Ascending aorta (tissue), 2 donors: ENCODE measurements at regions of chr7 and their contacts with region 1.

Region 1: DNA sequence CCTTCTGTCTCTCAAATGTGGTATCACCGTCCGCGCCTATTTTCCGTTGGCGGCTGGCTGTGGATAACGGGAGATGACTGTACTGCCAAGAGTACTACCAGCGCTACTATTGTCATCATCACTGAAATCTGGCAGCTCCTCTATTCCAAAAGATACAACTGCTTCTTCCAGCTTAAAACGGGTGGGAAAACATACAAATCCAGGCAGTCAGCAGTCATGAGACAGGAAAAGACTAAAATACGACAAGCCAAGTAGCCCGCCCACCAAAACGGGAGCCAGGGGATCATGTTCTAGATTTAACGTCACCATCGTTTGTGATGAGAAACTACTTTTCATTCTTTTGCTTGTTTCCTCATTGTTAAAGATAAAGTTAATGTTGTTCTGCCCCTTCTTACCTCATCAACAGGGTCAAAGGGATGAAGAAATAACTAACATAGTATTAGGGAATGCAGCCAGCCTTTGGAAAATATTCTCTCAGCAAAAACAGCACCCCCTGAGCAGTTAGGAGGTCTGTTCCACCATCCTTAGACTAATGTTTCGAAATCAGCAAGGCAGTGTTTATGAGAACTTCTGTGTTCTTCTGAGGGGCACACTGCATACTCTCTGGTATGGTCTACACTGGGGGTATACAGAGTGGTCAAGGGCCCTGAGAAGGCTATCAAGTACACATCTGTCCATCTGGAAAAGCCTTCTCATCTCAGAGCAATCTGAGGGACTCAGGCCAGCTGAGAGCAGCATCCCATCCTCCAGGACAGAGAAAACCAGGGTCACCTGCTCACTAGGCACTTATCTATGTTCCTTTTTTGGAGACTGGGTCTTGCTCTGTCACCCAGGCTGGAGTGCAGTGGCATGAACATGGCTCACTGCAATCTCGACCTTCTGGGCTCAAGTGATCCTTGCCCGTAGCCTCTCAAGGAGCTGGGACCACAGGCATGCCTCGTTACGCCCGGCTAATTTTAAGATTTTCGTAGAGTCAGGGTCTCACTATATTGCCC is 47.5 kb downstream of the GNA12 start:
- DNase-seq: peak in 1 of 2 donors; percentile 90
- H3K4me3 ChIP-seq: peak overlapping the region in 1 of 2 donors; percentile 37
- H3K27ac ChIP-seq: peak overlapping the region; percentile 64 to 72
- H3K4me1 ChIP-seq: peaks cover 0 to 13% of the 10 kb centered on the region in 2 donors
- H3K27me3 ChIP-seq: no peaks in the 10 kb centered on the region
- CTCF ChIP-seq: no peak

Region 2: GRCh38 chr7:2555121-2556052 is 241.3 kb before region 1 on chr7 and contains the start of gene BRAT1:
- intact Hi-C with region 1: no loop called
- DNase-seq: peak; percentile 84 to 98
- H3K4me3 ChIP-seq: peak within 1 kb of the TSS; percentile 67 to 75
- H3K27ac ChIP-seq: peak within 1 kb of the TSS; percentile 95 to 99
- H3K4me1 ChIP-seq: peaks cover 0 to 20% of the 10 kb centered on the region in 2 donors
- H3K27me3 ChIP-seq: no peaks in the 10 kb centered on the region
- CTCF ChIP-seq: peak in 1 of 3 experiments; percentile 49
- total RNA-seq, gene BRAT1: 84.0 TPM

Region 3: DNA sequence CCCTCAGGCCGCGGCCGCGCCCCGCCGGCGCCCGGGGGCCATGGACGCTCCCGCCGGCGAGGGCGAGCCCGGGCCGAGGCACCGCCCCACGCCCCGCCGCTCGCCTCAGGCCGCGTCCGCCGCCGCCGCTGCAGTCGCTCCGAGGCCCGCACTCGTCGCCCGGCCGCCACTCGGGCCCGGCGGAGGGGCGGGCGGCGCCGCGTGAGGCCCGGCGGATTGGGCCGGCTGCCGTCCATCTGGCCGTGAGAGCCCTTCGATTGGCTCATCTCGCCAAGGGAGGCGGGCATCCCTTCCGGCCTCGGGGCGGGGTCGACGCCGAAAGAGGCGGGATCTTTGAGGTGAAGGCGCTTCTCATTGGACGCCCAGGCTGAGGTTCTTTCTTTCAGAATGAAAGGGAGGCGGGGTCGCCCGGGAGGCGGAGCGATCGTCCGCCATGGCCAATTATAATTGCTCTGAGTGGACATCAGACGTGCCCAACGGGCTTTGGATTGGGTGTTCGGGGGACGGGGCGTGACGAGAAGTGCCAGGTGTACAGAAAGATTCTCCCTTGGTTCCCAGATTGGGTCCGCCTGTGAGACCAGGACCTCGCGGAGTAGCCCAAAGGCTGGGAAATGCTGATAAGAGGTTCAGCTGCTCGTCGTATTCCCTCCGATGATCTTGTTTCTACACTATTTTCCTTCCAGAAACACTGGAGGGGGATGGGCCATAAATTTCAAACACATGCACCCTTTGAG is 47.7 kb after region 1 on chr7 and contains the start of gene GNA12:
- intact Hi-C with region 1: loop called (anchors 5 kb)
- DNase-seq: peak; percentile 97 to 100
- H3K4me3 ChIP-seq: peak within 1 kb of the TSS; percentile 90 to 94
- H3K27ac ChIP-seq: peak within 1 kb of the TSS; percentile 57 to 62
- H3K4me1 ChIP-seq: peaks cover 9 to 18% of the 10 kb centered on the region in 2 donors
- H3K27me3 ChIP-seq: no peaks in the 10 kb centered on the region
- CTCF ChIP-seq: no peak
- total RNA-seq, gene GNA12: 61.0 TPM

Region 4: DNA sequence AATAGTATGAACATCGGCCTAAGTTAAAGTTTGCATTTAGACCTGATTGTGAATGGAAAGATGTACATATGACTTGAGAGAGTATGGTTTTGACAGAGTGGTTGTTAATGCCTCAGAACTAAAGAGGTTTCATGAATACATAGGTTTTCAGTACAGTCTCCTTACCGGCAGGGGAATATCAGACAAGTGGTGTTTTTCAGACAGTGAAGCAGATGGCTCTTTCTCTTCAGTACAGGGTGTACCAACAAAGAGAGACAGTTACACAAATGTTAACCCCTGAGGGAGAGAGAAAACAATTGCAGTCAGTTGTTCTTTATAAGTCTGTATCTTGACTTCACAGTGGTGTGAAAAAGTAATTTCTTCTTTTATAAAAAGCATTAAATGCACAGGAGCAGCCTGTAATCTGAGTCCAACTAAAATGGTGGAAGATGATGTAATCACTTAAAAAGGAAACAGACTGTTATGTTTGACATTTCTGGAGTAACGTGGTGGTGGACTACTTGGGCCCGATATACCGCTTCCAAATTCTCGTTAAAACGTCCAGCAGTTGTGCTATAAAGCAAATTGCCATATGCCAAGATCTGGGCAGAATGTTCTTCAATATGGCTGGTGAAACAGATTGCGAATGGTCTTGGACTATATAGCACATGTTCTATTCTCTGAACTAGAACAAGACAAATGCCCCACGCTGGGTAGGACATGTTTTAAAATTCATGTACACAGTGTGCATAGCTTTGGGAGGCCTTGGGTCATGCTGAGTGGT is 573.6 kb after region 1 on chr7:
- intact Hi-C with region 1: no loop called
- DNase-seq: no peak
- H3K4me3 ChIP-seq: no peak overlapping the region
- H3K27ac ChIP-seq: no peak overlapping the region
- H3K4me1 ChIP-seq: peaks cover 0 to 4% of the 10 kb centered on the region in 2 donors
- H3K27me3 ChIP-seq: no peaks in the 10 kb centered on the region
- CTCF ChIP-seq: no peak